ENCODE measurements at regions of chr17 and their contacts with region 1.

Region 1: DNA sequence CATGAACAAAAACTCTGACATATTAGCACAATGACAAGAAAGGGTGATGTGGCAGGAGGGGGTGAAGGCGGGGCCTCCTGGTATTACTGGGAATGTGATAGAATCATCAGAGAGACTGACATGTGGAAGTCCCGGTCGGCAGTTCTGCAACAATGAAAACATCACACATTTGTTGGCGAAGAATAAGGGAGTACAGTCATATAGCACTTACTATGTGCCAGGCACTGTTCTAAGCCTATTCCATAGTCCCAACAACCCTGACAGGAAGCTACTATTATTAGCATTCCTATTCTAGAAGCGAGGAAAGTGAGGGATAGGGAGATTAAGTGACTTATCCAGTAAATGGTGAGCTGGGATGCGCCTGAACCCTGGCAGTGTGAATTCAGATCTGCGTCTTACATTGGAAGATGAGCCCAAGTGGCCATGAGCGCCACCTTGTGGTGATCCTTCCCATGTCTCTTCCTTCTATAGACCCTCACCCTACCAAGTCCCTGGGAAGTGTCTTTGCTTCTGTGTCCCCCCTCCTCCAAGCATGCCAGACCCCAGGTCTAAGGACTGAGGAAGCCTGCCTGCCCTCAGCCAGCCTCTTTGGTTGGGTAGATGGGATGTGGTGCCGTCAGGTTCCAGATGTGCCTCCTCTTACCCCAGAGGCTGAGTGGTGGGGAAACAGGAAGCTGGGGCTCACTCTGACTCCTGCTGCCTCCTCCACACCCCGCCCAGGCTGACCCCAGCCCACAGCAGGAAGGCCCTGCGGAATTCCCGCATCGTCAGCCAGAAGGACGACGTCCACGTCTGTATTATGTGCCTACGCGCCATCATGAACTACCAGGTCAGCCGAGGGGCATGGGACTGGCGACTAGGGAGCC is 14.0 kb downstream of the FMNL1 start:
- DNase-seq: peak; percentile 86
- H3K4me3 Mint-ChIP-seq: no peak overlapping the region
- H3K27ac Mint-ChIP-seq: no peak overlapping the region
- H3K4me1 Mint-ChIP-seq: peaks cover 13% of the 10 kb centered on the region
- H3K27me3 Mint-ChIP-seq: peaks cover 56% of the 10 kb centered on the region
- CTCF ChIP-seq: peak; percentile 92

Region 2: GRCh38 chr17:45218895-45219661 is 16.6 kb before region 1 on chr17:
- CTCF ChIA-PET with region 1: interaction called, 66 read pairs
- intact Hi-C with region 1: loop called (anchors 1 kb)
- DNase-seq: peak; percentile 95
- H3K4me3 Mint-ChIP-seq: no peak overlapping the region
- H3K27ac Mint-ChIP-seq: no peak overlapping the region
- H3K4me1 Mint-ChIP-seq: no peaks in the 10 kb centered on the region
- H3K27me3 Mint-ChIP-seq: peaks cover 43% of the 10 kb centered on the region
- CTCF ChIP-seq: peak; percentile 98

Region 3: DNA sequence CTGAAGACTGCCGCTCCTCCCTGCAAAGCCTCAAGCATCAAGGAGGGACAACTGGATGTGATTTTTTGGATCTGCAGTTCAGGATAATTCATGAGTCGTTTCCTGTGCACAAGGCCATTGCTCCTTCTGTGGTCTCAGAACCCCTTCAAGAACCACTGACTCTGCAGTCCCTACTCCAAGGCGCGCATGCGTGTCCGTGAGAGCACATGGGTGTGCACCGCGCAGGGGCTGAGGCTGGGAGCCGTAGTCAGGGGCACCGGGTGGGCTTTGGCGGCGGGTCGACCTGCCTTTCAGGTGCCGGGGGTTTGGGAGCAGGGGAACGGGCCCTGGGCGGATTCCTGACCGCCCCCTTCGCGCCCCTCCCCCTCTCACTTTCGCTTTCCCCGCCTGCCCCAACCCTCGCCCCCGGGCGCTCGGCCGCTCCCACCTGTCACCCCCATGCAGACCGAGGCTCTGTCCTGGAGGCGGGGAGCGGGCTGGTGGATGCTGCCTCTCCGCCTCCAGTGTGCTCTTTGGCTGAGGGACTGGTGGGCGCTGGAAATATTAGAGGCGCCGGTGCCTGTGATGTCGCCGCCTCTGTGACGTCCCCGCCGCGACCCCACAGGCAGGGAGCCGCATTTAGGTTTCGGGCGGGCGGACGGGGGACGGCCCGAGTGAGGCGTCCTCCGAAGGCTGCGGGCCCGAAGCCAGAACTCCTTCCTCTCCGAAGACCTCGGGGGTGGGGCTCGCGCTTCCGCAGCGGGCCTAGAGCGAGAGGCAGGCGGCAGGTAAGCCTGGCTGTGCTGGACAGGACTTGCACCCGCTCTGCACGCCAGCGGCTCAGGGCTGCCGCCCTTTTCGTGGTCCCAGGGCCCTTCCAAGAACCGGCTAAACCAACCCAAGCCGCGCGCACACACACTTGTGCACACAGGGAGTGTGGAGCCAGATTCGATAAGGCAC is 26.2 kb after region 1 on chr17 and contains the start of gene SPATA32:
- CTCF ChIA-PET with region 1: no interaction called
- intact Hi-C with region 1: no loop called
- DNase-seq: no peak
- H3K4me3 Mint-ChIP-seq: no peak within 1 kb of the TSS
- H3K27ac Mint-ChIP-seq: no peak within 1 kb of the TSS
- H3K4me1 Mint-ChIP-seq: peaks cover 14% of the 10 kb centered on the region
- H3K27me3 Mint-ChIP-seq: no peaks in the 10 kb centered on the region
- CTCF ChIP-seq: no peak
- total RNA-seq, gene SPATA32: 0.85 and 0.88 TPM in 2 replicates